Endothelial cell of umbilical vein (primary cell): ENCODE measurements at regions of chr11 and their contacts with region 1.

Region 1: GRCh38 chr11:8964324-8965320 is at the start of gene TMEM9B:
- DNase-seq: peak; percentile 83
- H3K4me3 ChIP-seq: peak within 1 kb of the TSS; percentile 71 to 91 (median 81)
- H3K27ac ChIP-seq: peak within 1 kb of the TSS; percentile 88
- H3K4me1 ChIP-seq: peaks cover 15% of the 10 kb centered on the region
- H3K27me3 ChIP-seq: no peaks in the 10 kb centered on the region
- CTCF ChIP-seq: no peak
- POLR2A ChIP-seq: peak; percentile 96
- total RNA-seq, gene TMEM9B: 27.1 and 30.2 TPM in 2 replicates

Region 2: GRCh38 chr11:8610532-8611116 is 354.0 kb before region 1 on chr11:
- CTCF ChIA-PET with region 1: no interaction called
- POLR2A ChIA-PET with region 1: no interaction called
- dilution Hi-C with region 1: no loop called
- intact Hi-C with region 1: loop called (anchors 5 kb)
- DNase-seq: peak; percentile 20
- H3K4me3 ChIP-seq: no peak overlapping the region
- H3K27ac ChIP-seq: no peak overlapping the region
- H3K4me1 ChIP-seq: peaks cover 12% of the 10 kb centered on the region
- H3K27me3 ChIP-seq: peaks cover 0 to 1% of the 10 kb centered on the region in 2 experiments
- CTCF ChIP-seq: no peak
- POLR2A ChIP-seq: no peak

Region 3: DNA sequence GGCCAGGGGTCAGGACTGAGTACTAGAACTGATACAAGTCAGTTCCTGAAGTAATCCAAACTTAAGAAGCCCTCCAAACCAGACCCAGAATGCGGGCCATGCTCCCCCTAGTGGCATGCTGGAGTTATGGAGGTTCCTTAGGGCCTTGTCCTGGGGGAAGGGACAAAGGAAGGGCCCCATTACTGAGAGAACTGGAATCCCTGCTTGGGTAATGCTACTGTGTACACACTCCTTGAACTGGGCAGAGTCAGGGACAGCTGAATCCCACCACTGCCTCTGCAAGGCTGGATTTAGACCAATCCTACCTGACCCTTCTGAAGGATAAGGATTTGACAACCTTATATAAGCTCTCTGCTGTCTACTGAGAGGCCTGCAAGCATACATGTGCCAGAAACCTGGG is 151.0 kb before region 1 on chr11:
- CTCF ChIA-PET with region 1: interaction called, 11 read pairs
- POLR2A ChIA-PET with region 1: no interaction called
- dilution Hi-C with region 1: no loop called
- intact Hi-C with region 1: loop called (anchors 1 kb)
- DNase-seq: peak; percentile 81
- H3K4me3 ChIP-seq: no peak overlapping the region
- H3K27ac ChIP-seq: peak overlapping the region; percentile 37
- H3K4me1 ChIP-seq: peaks cover 15% of the 10 kb centered on the region
- H3K27me3 ChIP-seq: no peaks in the 10 kb centered on the region
- CTCF ChIP-seq: peak; percentile 90 to 96
- POLR2A ChIP-seq: no peak

Region 4: DNA sequence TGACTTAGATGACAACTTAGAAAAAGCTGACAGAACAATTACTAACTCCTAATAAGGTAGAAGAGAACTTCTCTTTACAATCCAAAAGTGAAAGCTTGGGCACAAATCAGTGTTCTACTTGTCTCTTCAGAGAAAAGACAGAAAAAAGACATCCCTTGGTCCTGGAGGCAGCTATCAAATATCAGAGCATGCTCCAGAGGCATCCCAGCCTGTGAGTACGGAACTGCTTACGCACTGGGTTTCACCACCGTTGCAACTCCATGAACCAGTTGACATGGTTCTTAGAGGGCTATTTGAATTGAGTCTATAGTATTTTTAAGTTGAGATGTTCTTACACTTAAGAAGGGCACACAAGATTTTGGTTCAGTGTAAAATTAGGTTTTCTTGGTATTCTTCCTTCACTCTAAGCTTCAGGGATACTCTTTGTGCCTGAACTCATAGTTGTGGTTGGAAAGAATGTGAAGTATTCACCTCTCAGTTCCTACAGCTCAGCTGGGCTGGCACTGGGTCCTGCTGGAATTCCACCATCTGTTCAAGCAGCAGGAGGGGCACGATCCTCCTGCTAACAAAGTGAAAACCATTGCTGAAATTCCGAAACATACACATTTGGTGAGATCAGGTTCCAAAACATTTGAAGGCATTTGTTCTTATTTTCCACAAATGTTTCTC is 47.3 kb before region 1 on chr11:
- CTCF ChIA-PET with region 1: interaction called, 140 read pairs
- POLR2A ChIA-PET with region 1: no interaction called
- dilution Hi-C with region 1: no loop called
- intact Hi-C with region 1: loop called (anchors 1 kb)
- DNase-seq: peak; percentile 58
- H3K4me3 ChIP-seq: no peak overlapping the region
- H3K27ac ChIP-seq: no peak overlapping the region
- H3K4me1 ChIP-seq: peaks cover 12% of the 10 kb centered on the region
- H3K27me3 ChIP-seq: no peaks in the 10 kb centered on the region
- CTCF ChIP-seq: no peak
- POLR2A ChIP-seq: no peak

Region 5: DNA sequence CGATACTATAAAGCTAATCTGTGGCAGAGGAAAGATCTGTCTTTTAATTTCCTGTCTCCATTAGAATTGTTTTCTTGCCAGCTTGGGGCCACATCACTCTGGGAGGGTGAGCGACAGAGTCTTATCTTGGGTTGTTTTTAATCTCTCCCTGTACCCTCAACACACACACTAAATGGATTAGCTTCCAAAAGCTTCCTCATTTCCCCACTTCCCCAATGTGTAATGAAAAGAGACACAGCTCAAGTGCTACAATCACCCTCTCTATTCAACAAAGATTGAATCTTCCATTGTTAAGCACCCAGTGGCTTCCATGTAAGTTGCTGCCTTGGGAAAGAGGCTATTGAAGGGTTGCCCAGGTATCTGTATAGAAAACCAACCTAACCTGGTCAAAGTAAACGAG is 15.7 kb before region 1 on chr11:
- CTCF ChIA-PET with region 1: interaction called, 25 read pairs
- POLR2A ChIA-PET with region 1: no interaction called
- dilution Hi-C with region 1: no loop called
- intact Hi-C with region 1: no loop called
- DNase-seq: peak; percentile 9
- H3K4me3 ChIP-seq: no peak overlapping the region
- H3K27ac ChIP-seq: no peak overlapping the region
- H3K4me1 ChIP-seq: no peaks in the 10 kb centered on the region
- H3K27me3 ChIP-seq: no peaks in the 10 kb centered on the region
- CTCF ChIP-seq: no peak
- POLR2A ChIP-seq: no peak

Region 6: GRCh38 chr11:9263840-9264315 is 299.3 kb after region 1 on chr11:
- CTCF ChIA-PET with region 1: no interaction called
- POLR2A ChIA-PET with region 1: no interaction called
- dilution Hi-C with region 1: no loop called
- intact Hi-C with region 1: no loop called
- DNase-seq: no peak
- H3K4me3 ChIP-seq: peak overlapping the region; percentile 71 to 83 (median 81)
- H3K27ac ChIP-seq: peak overlapping the region; percentile 81
- H3K4me1 ChIP-seq: peaks cover 16% of the 10 kb centered on the region
- H3K27me3 ChIP-seq: no peaks in the 10 kb centered on the region
- CTCF ChIP-seq: no peak
- POLR2A ChIP-seq: no peak